Activated CD4-positive, alpha-beta T cell treated with anti-CD3 and anti-CD28 coated beads, Interleukin-2, amount 10 ng/mL, durations not matched to agents 24 days and 14 days (primary cell): ENCODE measurements at regions of chr1 and their contacts with region 1.

Region 1: DNA sequence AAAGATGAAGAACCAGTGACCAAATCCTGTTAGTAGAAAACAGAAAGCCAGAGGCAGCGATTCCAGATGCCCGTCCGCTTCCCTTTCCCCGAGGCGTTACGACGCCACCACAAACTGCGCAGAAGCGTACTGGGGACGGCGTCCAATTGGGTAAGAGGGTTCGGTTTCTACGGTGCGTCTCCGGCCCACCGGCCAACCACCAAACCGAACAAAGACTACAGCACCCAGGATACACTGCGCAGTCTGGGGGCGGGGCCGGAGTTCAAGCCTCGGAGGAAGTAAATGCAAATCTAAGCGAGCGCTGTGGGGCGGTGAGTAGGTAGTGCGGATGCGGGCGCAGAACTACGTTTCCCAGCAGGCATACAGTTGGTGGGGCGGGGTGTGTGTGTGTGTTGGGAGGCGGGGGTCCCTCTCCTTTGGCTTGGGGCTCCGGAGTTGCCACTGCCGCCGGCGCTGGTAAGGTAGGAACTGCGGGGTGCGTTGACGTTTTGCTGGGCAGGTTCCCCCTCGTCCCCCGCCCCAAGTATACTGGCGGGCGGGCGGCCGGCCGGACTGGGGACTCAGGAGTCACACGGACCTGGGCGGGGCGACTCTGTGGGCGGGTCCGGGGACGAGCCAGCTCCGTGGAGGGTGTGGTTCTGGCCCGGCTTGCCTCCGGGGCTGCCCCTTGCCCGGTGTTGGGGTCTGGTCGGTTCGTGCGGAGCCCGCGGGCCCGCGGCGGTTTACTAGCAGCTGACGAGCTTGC is at the starts of genes SWT1 and TRMT1L:
- DNase-seq: peak; percentile 99
- H3K4me3 Mint-ChIP-seq: peak within 1 kb of the TSS; percentile 98
- H3K27ac Mint-ChIP-seq: peak within 1 kb of the TSS; percentile 98
- H3K4me1 Mint-ChIP-seq: peaks cover 55% of the 10 kb centered on the region
- H3K27me3 Mint-ChIP-seq: no peaks in the 10 kb centered on the region
- total RNA-seq, gene SWT1: 1.4 and 1.8 TPM in 2 replicates
- total RNA-seq, gene TRMT1L: 22.4 and 26.0 TPM in 2 replicates

Region 2: DNA sequence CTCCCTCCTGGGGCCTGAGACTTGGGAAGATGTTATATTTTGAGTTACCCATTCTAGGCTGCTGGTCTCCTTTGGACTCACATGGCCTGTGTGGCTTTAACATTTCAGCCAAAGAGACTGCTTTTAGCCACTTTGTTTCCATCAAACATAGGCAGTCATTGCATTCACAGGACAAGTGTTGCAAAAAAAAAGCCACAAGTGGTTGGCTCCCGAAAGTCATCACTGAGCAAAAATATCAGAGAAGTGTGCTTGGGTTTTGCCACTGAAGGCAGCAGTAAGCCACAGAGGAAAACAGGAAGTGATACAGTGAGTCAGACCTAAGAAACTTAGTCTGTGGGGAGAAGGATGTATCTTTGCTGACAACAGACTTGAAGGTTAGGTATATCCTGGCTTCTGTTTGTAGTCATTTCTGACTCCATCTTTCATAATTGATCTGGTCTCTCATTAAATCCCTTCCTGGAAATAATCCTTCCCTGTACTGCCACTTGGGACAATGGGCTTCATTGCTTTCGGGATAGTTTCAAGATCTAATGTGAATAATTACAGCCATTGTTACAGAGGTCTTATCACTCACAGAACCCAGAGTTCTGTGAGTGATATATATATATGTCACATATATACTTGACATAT is 1200.4 kb before region 1 on chr1:
- intact Hi-C with region 1: loop called (anchors 2 kb)
- DNase-seq: peak; percentile 91
- H3K4me3 Mint-ChIP-seq: peak overlapping the region; percentile 58
- H3K27ac Mint-ChIP-seq: no peak overlapping the region
- H3K4me1 Mint-ChIP-seq: peaks cover 21% of the 10 kb centered on the region
- H3K27me3 Mint-ChIP-seq: no peaks in the 10 kb centered on the region

Region 3: GRCh38 chr1:184754476-184755225 is 402.4 kb before region 1 on chr1 and contains the start of gene EDEM3:
- intact Hi-C with region 1: loop called (anchors 1 kb)
- DNase-seq: peak; percentile 99
- H3K4me3 Mint-ChIP-seq: peak within 1 kb of the TSS; percentile 98
- H3K27ac Mint-ChIP-seq: peak within 1 kb of the TSS; percentile 96
- H3K4me1 Mint-ChIP-seq: peaks cover 23% of the 10 kb centered on the region
- H3K27me3 Mint-ChIP-seq: peaks cover 7% of the 10 kb centered on the region
- total RNA-seq, gene EDEM3: 23.6 and 28.3 TPM in 2 replicates

Region 4: GRCh38 chr1:185044981-185045813 is 111.8 kb before region 1 on chr1 and contains the start of gene RNF2:
- intact Hi-C with region 1: loop called (anchors 1 kb)
- DNase-seq: peak; percentile 91
- H3K4me3 Mint-ChIP-seq: peak within 1 kb of the TSS; percentile 93
- H3K27ac Mint-ChIP-seq: peak within 1 kb of the TSS; percentile 91
- H3K4me1 Mint-ChIP-seq: peaks cover 26% of the 10 kb centered on the region
- H3K27me3 Mint-ChIP-seq: peaks cover 18% of the 10 kb centered on the region
- total RNA-seq, gene RNF2: 17.8 and 21.1 TPM in 2 replicates

Region 5: GRCh38 chr1:185439727-185440415 is 282.8 kb after region 1 on chr1:
- intact Hi-C with region 1: loop called (anchors 10 kb)
- DNase-seq: peak; percentile 86
- H3K4me3 Mint-ChIP-seq: no peak overlapping the region
- H3K27ac Mint-ChIP-seq: no peak overlapping the region
- H3K4me1 Mint-ChIP-seq: peaks cover 28% of the 10 kb centered on the region
- H3K27me3 Mint-ChIP-seq: no peaks in the 10 kb centered on the region

Region 6: GRCh38 chr1:186375088-186375953 is 1218.3 kb after region 1 on chr1 and contains the starts of genes ODR4 and TPR:
- intact Hi-C with region 1: loop called (anchors 1 kb)
- DNase-seq: peak; percentile 99
- H3K4me3 Mint-ChIP-seq: peak within 1 kb of the TSS; percentile 100
- H3K27ac Mint-ChIP-seq: peak within 1 kb of the TSS; percentile 99
- H3K4me1 Mint-ChIP-seq: peaks cover 37% of the 10 kb centered on the region
- H3K27me3 Mint-ChIP-seq: no peaks in the 10 kb centered on the region
- total RNA-seq, gene ODR4: 15.6 and 20.0 TPM in 2 replicates
- total RNA-seq, gene TPR: 174 and 185 TPM in 2 replicates